A549 (cell line): ENCODE measurements at regions of chr11 and their contacts with region 1.

Region 1: DNA sequence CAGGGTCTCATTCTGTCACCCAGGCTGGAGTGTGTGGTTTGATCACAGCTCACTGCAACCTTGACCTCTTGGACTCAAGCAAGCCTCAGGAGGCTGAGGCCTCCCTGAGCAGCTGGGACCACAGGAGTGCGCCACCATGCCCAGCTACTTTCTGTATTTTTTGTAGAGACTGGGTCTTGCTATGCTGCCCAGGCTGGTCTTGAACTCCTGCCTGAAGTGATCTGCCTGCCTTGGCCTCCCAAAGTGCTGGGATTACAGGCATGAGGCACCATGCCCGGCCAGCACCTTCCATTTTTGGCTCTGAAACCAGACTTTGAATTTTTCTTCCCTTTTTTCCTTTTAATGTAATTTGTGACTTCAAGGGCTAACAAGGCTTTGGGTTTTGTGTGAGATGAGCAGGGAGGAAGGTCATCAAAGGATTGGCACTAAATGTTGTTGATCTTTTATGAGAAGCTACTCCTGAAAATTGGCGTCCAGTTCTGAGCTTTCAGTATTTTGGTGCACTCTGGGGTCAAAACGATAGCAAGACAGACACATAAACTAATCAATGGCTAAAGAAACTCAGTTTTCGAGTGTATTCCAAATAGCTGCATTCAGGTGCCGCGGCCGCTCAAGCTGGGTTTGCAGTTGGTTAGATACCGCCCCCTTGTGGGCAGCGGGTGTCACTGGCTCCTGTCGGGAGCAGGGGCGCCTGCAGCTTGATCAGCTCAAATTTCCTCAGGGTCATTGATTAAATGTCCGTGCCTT is 51.9 kb upstream of the CLMP start:
- DNase-seq: peak; percentile 60 to 75
- ATAC-seq: peak; percentile 89 to 94
- H3K4me3 ChIP-seq: no peak overlapping the region
- H3K27ac ChIP-seq: peak overlapping the region; percentile 67 to 80; a peak in 5 of 6 replicates
- H3K4me1 ChIP-seq: peaks cover 23% of the 10 kb centered on the region
- CTCF ChIP-seq: peak; percentile 91
- EP300 ChIP-seq: no peak
- POLR2A ChIP-seq: no peak
- RAD21 ChIP-seq: peak; percentile 97

Region 2: DNA sequence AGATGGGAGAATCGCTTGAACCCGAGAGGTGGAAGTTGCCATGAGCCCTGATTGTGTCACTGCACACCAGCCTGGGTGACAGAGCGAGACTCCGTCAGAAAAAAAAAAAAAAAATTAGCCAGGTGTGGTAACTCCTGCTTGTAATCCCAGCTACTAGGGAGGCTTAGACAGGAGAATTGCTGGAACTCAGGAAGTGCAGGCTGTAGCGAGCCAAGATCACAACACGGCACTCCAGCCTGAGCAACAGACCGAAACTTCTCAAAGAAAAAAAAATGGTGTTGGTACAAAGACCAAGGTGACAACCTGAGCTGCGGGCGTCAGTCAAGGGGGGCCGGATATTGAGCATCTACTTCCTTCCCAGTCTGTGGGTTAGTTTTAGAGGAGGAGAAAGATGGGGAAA is 136.6 kb before region 1 on chr11:
- CTCF ChIA-PET with region 1: interaction called, 358 read pairs
- POLR2A ChIA-PET with region 1: no interaction called
- DNase-seq: no peak
- ATAC-seq: no peak
- H3K4me3 ChIP-seq: no peak overlapping the region
- H3K27ac ChIP-seq: no peak overlapping the region
- H3K4me1 ChIP-seq: peaks cover 8% of the 10 kb centered on the region; the same call in 2 of the 3 replicates
- CTCF ChIP-seq: no peak
- EP300 ChIP-seq: no peak
- POLR2A ChIP-seq: no peak
- RAD21 ChIP-seq: no peak

Region 3: DNA sequence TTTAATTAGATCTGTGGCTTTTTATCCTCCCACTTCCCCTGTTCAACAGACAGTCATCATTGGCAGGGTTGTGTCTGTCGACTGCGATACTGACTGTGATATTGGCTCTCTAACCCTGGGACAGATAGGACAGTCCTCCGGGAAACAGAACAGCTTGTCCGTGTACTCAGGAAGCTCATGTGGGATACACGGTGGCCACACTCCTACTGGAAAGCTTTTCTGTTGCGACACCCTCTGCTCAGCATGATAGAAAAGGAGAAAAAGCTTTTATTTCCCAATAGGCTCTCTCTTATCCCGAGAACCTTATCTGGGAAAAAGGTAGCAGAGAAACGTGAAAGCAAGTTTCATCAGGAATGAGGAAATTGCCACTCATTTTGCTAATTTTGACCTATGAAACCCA is 124.6 kb before region 1 on chr11:
- CTCF ChIA-PET with region 1: interaction called, 21 read pairs
- POLR2A ChIA-PET with region 1: no interaction called
- DNase-seq: peak in 1 of 2 experiments; percentile 50
- ATAC-seq: peak; percentile 70 to 74; a peak in 4 of 6 replicates
- H3K4me3 ChIP-seq: no peak overlapping the region
- H3K27ac ChIP-seq: peak overlapping the region; percentile 77 to 78
- H3K4me1 ChIP-seq: peaks cover 31% of the 10 kb centered on the region
- CTCF ChIP-seq: no peak
- EP300 ChIP-seq: no peak
- POLR2A ChIP-seq: no peak
- RAD21 ChIP-seq: no peak

Region 4: DNA sequence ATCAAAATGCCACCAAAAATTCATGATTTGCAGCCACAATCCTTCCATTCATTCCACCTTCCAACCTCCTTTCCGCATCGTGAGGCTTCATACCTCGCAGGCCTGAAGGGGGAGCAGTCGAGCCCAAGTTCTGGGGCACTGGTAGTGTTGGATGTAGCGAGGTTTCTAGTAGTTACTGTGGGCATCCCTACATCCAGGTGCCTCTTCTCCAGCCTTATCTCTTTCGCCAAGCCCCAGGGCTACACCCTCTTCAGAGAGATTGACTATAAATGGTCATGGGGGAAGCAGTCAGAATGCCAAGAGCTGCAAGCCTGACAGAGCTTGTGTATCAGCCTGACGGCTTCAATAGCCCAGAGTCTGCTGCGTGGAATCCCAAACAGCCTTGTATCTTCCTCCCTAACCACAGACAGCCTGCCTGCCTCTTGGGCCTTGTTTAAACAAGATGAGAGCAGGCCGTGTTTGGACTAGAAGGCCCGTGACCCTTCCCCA is 80.8 kb before region 1 on chr11:
- CTCF ChIA-PET with region 1: interaction called, 27 read pairs
- POLR2A ChIA-PET with region 1: no interaction called
- DNase-seq: peak in 1 of 2 experiments; percentile 32
- ATAC-seq: peak; percentile 71 to 87; a peak in 5 of 6 replicates
- H3K4me3 ChIP-seq: no peak overlapping the region
- H3K27ac ChIP-seq: peak overlapping the region in 1 of 2 experiments; percentile 53; a peak in 3 of 6 replicates
- H3K4me1 ChIP-seq: peaks cover 9% of the 10 kb centered on the region; the same call in 2 of the 3 replicates
- CTCF ChIP-seq: peak; percentile 31; the same call in 2 of the 3 replicates
- EP300 ChIP-seq: no peak
- POLR2A ChIP-seq: no peak
- RAD21 ChIP-seq: peak; percentile 21 to 52; a peak in 3 of 5 replicates

Region 5: GRCh38 chr11:123219066-123219690 is 27.7 kb before region 1 on chr11:
- CTCF ChIA-PET with region 1: interaction called, 21 read pairs
- POLR2A ChIA-PET with region 1: no interaction called
- DNase-seq: peak in 1 of 2 experiments; percentile 68
- ATAC-seq: peak; percentile 87 to 94; a peak in 5 of 6 replicates
- H3K4me3 ChIP-seq: no peak overlapping the region
- H3K27ac ChIP-seq: peak overlapping the region; percentile 85 to 92
- H3K4me1 ChIP-seq: peaks cover 30% of the 10 kb centered on the region
- CTCF ChIP-seq: no peak
- EP300 ChIP-seq: no peak
- POLR2A ChIP-seq: no peak
- RAD21 ChIP-seq: no peak

Region 6: DNA sequence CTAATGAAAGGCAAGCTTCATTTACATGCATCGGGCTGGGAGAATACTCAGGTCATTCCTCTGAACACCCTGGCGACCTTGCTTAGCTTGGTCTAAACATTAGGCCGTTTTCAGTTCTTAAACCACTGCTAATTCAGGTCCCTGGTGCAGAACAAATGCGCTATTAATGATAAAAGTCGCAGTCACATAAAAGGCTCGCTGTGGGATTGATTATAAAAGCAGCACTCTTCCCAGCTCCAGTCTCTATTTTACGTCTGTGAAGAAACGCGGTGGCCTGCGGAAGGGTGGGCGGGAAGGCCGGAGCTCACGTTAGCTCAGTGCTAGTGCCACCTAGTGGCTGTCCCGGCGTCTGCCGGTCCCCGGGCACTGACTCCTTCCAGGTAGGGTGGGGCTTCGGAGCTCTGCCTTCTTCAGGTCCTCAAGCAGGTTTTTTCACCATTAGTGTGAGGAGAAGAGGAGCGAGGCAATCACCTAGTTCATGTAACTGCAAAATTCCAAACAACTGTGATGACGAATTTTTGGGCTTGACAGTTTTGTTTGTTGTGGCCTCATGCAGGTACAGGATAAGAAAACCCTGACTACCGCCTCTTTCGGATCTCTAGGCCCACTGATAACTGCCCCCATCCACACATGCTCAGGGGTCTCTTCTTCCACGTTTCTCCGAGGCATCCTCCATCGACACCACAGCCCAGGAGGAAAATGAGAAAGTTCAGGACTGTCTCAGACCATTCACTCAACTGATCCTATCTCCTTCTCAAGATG is 14.6 kb after region 1 on chr11:
- CTCF ChIA-PET with region 1: interaction called, 41 read pairs
- POLR2A ChIA-PET with region 1: no interaction called
- DNase-seq: peak; percentile 71 to 73
- ATAC-seq: peak; percentile 96 to 99
- H3K4me3 ChIP-seq: peak overlapping the region; percentile 30
- H3K27ac ChIP-seq: peak overlapping the region; percentile 61 to 79; a peak in 4 of 6 replicates
- H3K4me1 ChIP-seq: no peaks in the 10 kb centered on the region
- CTCF ChIP-seq: peak; percentile 82
- EP300 ChIP-seq: no peak
- POLR2A ChIP-seq: no peak
- RAD21 ChIP-seq: peak; percentile 79 to 83